MCF 10A (cell line): ENCODE measurements at regions of chr9 and their contacts with region 1.

Region 1: GRCh38 chr9:92140074-92140753 is 25.0 kb upstream of the SPTLC1 start:
- DNase-seq: peak; percentile 72
- H3K4me3 Mint-ChIP-seq: peak overlapping the region; percentile 35
- H3K27ac Mint-ChIP-seq: no peak overlapping the region
- H3K4me1 Mint-ChIP-seq: peaks cover 15% of the 10 kb centered on the region
- H3K27me3 Mint-ChIP-seq: no peaks in the 10 kb centered on the region
- CTCF ChIP-seq: peak; percentile 91

Region 2: DNA sequence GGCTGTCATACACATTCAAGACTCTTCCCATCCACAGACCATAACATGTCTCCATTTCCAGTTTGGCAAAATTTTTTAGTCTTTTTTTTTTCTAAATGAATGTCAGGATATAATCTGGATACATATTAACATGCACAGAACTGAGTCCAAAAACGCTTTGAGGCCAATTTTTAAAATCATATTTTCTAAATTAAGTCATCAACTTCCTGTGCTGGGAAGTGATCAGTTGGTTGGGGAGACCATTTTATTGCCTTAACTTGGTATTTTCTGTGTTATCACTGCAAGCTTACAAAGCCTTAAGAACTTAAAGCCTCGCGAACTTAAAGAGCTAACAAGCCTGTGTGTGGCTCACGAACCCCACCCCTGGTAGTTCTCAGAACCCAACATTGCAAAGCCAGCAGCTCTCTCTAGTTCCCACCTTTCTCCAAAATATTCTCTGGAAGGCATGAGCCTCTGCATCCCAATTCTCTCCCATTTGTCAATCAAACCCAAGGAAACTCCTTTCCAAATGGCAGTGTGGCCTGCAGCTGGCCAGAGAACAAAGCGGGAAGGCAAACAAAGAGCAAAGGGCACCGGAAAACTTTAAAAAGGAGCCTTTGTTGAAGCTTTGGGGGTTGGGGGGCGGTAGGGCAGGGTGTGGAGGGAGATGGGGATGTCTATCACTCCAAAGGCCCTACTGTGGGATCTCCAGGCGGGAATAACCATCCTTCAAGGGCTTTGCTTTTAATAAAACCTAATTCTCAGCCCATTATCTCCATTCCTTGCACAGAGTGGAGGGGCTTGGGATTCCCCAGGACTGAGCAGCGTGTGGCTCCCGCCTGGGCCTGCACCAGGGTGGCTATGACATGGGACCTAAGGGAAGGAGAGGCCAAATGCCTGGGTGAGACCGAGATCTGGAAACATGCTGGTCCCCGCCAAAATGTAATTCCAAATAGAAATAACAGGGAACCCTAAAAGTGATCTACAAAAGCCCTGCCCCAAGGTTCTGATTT is 255.2 kb before region 1 on chr9:
- CTCF ChIA-PET with region 1: no interaction called
- POLR2A ChIA-PET with region 1: no interaction called
- intact Hi-C with region 1: no loop called
- DNase-seq: no peak
- H3K4me3 Mint-ChIP-seq: no peak overlapping the region
- H3K27ac Mint-ChIP-seq: no peak overlapping the region
- H3K4me1 Mint-ChIP-seq: no peaks in the 10 kb centered on the region
- H3K27me3 Mint-ChIP-seq: peaks cover 17% of the 10 kb centered on the region
- CTCF ChIP-seq: no peak

Region 3: GRCh38 chr9:91960367-91960766 is 179.8 kb before region 1 on chr9:
- CTCF ChIA-PET with region 1: no interaction called
- POLR2A ChIA-PET with region 1: no interaction called
- intact Hi-C with region 1: no loop called
- DNase-seq: no peak
- H3K4me3 Mint-ChIP-seq: no peak overlapping the region
- H3K27ac Mint-ChIP-seq: no peak overlapping the region
- H3K4me1 Mint-ChIP-seq: no peaks in the 10 kb centered on the region
- H3K27me3 Mint-ChIP-seq: no peaks in the 10 kb centered on the region
- CTCF ChIP-seq: no peak

Region 4: GRCh38 chr9:92171822-92172221 is 31.6 kb after region 1 on chr9:
- CTCF ChIA-PET with region 1: interaction called, 10 read pairs
- POLR2A ChIA-PET with region 1: no interaction called
- intact Hi-C with region 1: no loop called
- DNase-seq: no peak
- H3K4me3 Mint-ChIP-seq: no peak overlapping the region
- H3K27ac Mint-ChIP-seq: no peak overlapping the region
- H3K4me1 Mint-ChIP-seq: no peaks in the 10 kb centered on the region
- H3K27me3 Mint-ChIP-seq: no peaks in the 10 kb centered on the region
- CTCF ChIP-seq: no peak

Region 5: GRCh38 chr9:92206488-92206887 is 66.3 kb after region 1 on chr9:
- CTCF ChIA-PET with region 1: interaction called, 30 read pairs
- POLR2A ChIA-PET with region 1: no interaction called
- intact Hi-C with region 1: loop called (anchors 10 kb)
- DNase-seq: peak; percentile 24
- H3K4me3 Mint-ChIP-seq: no peak overlapping the region
- H3K27ac Mint-ChIP-seq: no peak overlapping the region
- H3K4me1 Mint-ChIP-seq: no peaks in the 10 kb centered on the region
- H3K27me3 Mint-ChIP-seq: no peaks in the 10 kb centered on the region
- CTCF ChIP-seq: no peak

Region 6: DNA sequence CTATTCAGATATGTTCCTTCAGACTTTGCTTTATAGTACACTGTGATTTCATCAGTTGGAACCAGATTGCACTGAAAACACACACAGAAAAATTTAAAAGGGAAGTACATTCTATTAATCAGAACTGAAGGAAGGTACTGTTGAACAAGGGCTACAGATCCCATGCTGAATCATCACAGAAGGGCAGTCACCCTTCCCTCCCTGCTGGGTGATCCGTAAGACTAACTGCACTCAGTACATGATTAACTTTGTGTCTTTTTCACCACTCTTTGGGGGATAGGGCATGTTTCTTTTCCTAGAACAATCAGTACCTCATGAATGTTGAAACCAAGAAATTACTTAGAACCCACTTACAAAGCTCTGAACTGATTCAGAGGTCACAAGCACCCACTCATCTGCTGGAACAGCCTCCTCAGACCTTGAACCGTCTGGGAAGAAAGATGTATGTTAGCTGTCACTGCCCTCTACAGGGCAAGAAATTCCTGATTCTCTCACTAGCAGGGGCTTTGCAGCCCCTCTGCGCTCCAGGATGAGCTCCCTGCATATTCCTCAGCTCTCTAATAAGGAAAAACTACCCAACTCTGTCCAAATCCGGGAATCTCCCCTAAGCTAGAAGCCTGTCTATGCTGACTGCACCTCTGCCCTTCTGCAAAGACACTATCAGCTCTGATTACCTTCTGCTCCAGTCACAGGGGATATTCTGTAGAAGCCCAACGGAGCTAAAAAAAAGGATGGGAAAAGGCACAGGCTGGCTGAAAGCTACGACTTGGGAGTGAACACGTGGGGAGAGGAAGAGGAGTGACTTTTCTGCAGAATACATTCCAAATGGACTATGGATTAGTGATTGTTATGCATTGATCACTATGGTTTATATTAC is 102.3 kb after region 1 on chr9:
- CTCF ChIA-PET with region 1: interaction called, 153 read pairs
- POLR2A ChIA-PET with region 1: interaction called, 12 read pairs
- intact Hi-C with region 1: loop called (anchors 2 kb)
- DNase-seq: no peak
- H3K4me3 Mint-ChIP-seq: no peak overlapping the region
- H3K27ac Mint-ChIP-seq: peak overlapping the region; percentile 47
- H3K4me1 Mint-ChIP-seq: peaks cover 23% of the 10 kb centered on the region
- H3K27me3 Mint-ChIP-seq: no peaks in the 10 kb centered on the region
- CTCF ChIP-seq: peak; percentile 14

Region 7: DNA sequence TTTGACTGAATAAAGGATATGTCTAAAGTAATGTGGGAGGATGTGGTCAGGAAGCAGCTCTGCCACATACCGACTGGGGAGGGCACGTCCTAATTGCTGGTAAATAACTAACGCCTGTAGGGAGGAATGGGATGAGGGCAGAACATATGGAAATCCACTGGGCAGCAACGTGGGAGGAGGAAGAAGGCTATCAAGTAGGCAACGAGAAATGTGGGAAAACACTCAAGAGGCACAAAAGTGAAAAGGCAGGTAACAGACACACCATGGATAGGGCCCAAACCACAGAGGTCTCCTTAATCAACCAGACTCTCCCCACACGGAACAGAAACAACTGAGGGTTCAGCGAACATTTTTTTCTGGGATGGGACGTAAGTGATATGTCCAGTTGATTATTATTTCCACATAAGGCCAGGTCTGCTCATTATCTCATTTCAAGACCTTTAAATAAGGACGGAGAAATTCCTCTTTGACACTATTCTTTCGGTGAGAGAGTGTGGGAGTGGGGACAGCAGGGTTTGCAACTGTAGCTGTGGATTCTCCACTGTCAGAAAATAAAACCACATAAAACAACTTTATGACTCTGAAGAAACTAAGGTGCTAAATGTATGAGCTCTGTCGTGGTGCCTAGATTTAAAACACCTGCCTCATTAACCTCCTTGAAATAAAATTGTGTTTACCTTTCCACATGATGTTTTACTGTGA is 136.3 kb after region 1 on chr9:
- CTCF ChIA-PET with region 1: interaction called, 38 read pairs
- POLR2A ChIA-PET with region 1: no interaction called
- intact Hi-C with region 1: no loop called
- DNase-seq: no peak
- H3K4me3 Mint-ChIP-seq: no peak overlapping the region
- H3K27ac Mint-ChIP-seq: peak overlapping the region; percentile 64
- H3K4me1 Mint-ChIP-seq: peaks cover 4% of the 10 kb centered on the region
- H3K27me3 Mint-ChIP-seq: no peaks in the 10 kb centered on the region
- CTCF ChIP-seq: no peak

Region 8: DNA sequence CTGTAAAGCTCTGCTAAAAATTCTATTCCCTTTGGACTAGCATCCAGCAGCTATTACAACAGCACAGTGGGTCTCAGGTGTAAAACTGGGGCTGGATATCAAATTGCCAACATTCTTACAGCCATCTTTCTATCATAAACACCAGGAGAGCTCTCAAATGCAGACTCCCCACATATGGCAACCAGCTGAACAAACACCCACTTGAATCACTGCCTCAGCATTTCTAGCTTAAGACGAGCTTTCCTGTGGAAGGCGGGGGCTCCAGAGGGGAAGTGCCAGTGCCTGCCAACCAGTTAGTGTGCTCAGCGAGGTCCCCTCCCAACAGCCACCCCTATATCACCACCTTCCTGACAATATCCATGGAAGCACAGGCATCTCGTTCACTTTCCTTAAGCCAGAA is 467.6 kb after region 1 on chr9:
- CTCF ChIA-PET with region 1: no interaction called
- POLR2A ChIA-PET with region 1: no interaction called
- intact Hi-C with region 1: no loop called
- DNase-seq: peak; percentile 57
- H3K4me3 Mint-ChIP-seq: no peak overlapping the region
- H3K27ac Mint-ChIP-seq: no peak overlapping the region
- H3K4me1 Mint-ChIP-seq: peaks cover 8% of the 10 kb centered on the region
- H3K27me3 Mint-ChIP-seq: no peaks in the 10 kb centered on the region
- CTCF ChIP-seq: no peak

Region 9: GRCh38 chr9:92790542-92791527 is 650.6 kb after region 1 on chr9:
- CTCF ChIA-PET with region 1: interaction called, 5 read pairs
- POLR2A ChIA-PET with region 1: no interaction called
- intact Hi-C with region 1: loop called (anchors 2 kb)
- DNase-seq: peak; percentile 81
- H3K4me3 Mint-ChIP-seq: no peak overlapping the region
- H3K27ac Mint-ChIP-seq: no peak overlapping the region
- H3K4me1 Mint-ChIP-seq: peaks cover 9% of the 10 kb centered on the region
- H3K27me3 Mint-ChIP-seq: no peaks in the 10 kb centered on the region
- CTCF ChIP-seq: peak; percentile 85